Activated CD4-positive, alpha-beta T cell treated with anti-CD3 and anti-CD28 coated beads, Interleukin-2, amount 10 ng/mL, durations not matched to agents 24 days and 14 days (primary cell): ENCODE measurements at regions of chr18 and their contacts with region 1.

Region 1: DNA sequence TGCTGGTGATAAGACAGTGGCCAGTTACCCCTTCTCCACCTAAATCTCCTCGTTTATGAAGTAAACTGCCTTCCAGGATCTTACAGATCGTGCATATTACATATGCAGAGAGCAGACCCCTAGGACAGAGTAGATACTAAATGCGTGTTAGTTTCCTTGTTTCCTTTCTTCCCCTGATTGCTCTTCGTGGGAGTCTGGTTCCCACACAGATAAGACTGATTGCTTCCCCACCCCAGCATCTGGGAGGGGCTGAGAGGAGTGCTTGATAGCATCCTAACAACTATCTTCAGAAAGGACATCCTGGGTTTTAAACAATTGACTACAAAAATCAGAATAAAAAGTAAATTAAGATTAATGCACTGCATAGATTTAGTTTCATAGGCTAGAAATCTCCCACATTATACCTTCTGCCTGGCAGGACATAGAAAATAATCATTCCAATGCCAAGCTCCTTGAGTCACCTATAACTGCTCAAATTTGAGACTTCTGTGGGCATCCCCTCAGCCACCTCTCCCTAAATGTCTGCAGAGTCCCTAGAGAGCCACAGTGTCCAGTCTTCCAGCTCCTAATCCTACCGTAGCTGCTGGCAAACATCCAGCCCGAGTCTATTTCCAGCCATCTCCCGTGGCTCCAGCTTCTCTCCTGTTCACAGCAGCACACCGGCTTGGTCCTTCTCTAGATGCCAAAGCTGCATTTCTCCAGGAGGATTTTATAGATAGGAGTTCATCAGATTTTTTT is 128.3 kb downstream of the LRRC30 start:
- DNase-seq: no peak
- H3K4me3 Mint-ChIP-seq: no peak overlapping the region
- H3K27ac Mint-ChIP-seq: no peak overlapping the region
- H3K4me1 Mint-ChIP-seq: no peaks in the 10 kb centered on the region
- H3K27me3 Mint-ChIP-seq: no peaks in the 10 kb centered on the region

Region 2: GRCh38 chr18:7291046-7291445 is 68.1 kb before region 1 on chr18:
- intact Hi-C with region 1: loop called (anchors 10 kb)
- DNase-seq: no peak
- H3K4me3 Mint-ChIP-seq: no peak overlapping the region
- H3K27ac Mint-ChIP-seq: no peak overlapping the region
- H3K4me1 Mint-ChIP-seq: no peaks in the 10 kb centered on the region
- H3K27me3 Mint-ChIP-seq: no peaks in the 10 kb centered on the region